Activated CD4-positive, alpha-beta memory T cell treated with anti-CD3 and anti-CD28 coated beads for 36 hours (primary cell): ENCODE measurements at regions of chr2 and their contacts with region 1.

Region 1: GRCh38 chr2:169462896-169463695 is 16.2 kb upstream of the BBS5 start:
- DNase-seq: no peak
- H3K4me3 Mint-ChIP-seq: no peak overlapping the region
- H3K27ac Mint-ChIP-seq: no peak overlapping the region
- H3K4me1 Mint-ChIP-seq: peaks cover 2% of the 10 kb centered on the region
- H3K27me3 Mint-ChIP-seq: no peaks in the 10 kb centered on the region

Region 2: DNA sequence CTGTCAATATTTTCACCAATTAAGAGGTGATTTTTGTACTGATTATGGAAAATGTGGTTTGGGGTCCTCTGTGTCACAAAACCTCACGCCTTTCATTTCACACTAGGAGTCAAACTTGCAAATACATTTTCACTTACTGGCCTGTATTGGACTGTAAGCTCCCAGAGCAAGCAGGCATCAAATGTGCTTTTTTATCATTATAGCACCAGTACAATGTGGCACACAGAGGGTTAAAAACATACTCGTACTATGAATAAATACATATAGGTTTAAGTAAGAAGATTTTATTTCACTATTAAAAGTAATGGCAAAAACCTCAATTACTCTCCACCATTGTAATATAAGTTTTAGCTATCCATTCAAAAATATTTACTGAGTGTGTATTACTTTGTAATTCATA is 488.7 kb before region 1 on chr2:
- CTCF ChIA-PET with region 1: no interaction called
- POLR2A ChIA-PET with region 1: no interaction called
- intact Hi-C with region 1: loop called (anchors 5 kb)
- DNase-seq: no peak
- H3K4me3 Mint-ChIP-seq: no peak overlapping the region
- H3K27ac Mint-ChIP-seq: no peak overlapping the region
- H3K4me1 Mint-ChIP-seq: no peaks in the 10 kb centered on the region
- H3K27me3 Mint-ChIP-seq: no peaks in the 10 kb centered on the region

Region 3: GRCh38 chr2:169452080-169452479 is 11.0 kb before region 1 on chr2:
- CTCF ChIA-PET with region 1: interaction called, 10 read pairs
- POLR2A ChIA-PET with region 1: no interaction called
- intact Hi-C with region 1: no loop called
- DNase-seq: no peak
- H3K4me3 Mint-ChIP-seq: no peak overlapping the region
- H3K27ac Mint-ChIP-seq: no peak overlapping the region
- H3K4me1 Mint-ChIP-seq: no peaks in the 10 kb centered on the region
- H3K27me3 Mint-ChIP-seq: peaks cover 5% of the 10 kb centered on the region